GM18951 (cell line): ENCODE measurements at regions of chr5 and their contacts with region 1.

Region 1: GRCh38 chr5:163564321-163564938 is 59.0 kb downstream of the MAT2B start:
- POLR2A ChIP-seq: no peak

Region 2: GRCh38 chr5:163408311-163408923 is 156.0 kb before region 1 on chr5:
- in situ Hi-C with region 1: no loop called
- POLR2A ChIP-seq: no peak

Region 3: GRCh38 chr5:164504141-164504772 is 939.8 kb after region 1 on chr5:
- in situ Hi-C with region 1: loop called (anchors 25 kb)
- POLR2A ChIP-seq: no peak

Region 4: GRCh38 chr5:165209086-165209727 is 1644.8 kb after region 1 on chr5:
- in situ Hi-C with region 1: loop called (anchors 25 kb)
- POLR2A ChIP-seq: no peak